GM10248 (cell line): ENCODE measurements at regions of chr12 and their contacts with region 1.

Region 1: GRCh38 chr12:104083769-104084475 is 19.6 kb downstream of the HCFC2 start:
- DNase-seq: peak; percentile 63
- CTCF ChIP-seq: no peak

Region 2: GRCh38 chr12:103667125-103667524 is 416.8 kb before region 1 on chr12:
- CTCF ChIA-PET with region 1: no interaction called
- POLR2A ChIA-PET with region 1: no interaction called
- DNase-seq: no peak
- CTCF ChIP-seq: no peak

Region 3: DNA sequence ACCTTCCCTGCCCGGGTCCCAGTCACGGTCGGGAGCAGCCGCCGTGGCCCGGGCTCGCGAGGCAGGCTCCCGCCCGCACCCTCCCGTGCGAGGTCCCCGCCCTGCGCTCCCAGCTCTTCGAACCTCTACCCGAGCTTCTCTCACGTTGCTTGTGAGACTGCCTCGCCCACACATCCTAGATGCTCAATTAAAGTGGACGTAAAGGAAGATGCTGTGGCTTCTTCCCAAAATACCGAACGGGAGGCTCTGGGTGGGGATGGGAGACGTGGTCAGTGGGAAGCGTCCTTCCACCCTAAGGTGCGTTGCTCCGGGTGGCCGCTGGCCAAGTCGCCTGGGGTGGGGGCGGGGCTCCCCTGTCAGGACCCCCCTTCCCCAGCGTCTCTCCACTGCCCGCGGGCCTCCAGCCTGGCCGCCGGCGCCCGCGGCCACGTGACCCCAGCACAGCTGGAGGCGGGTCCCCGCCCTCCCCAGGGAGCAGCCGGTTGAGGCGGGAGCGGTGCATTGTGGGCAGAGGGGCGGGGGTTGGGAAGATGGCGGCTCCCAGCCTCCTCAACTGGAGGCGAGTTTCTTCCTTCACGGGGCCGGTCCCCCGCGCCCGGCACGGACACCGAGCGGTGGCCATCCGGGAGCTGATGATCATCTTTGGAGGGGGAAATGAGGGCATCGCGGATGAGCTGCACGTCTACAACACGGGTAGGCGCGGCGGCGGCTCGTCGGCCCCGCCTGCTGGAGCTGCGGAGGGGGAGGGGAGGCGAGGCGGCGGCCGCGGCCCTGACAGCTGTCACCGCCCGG is 19.7 kb before region 1 on chr12 and contains the start of gene HCFC2:
- CTCF ChIA-PET with region 1: interaction called, 10 read pairs
- POLR2A ChIA-PET with region 1: interaction called, 4 read pairs
- DNase-seq: peak; percentile 99
- CTCF ChIP-seq: no peak